Breast epithelium (tissue), 4 donors: ENCODE measurements at regions of chr20 and their contacts with region 1.

Region 1: GRCh38 chr20:58028123-58028522 is 200.3 kb downstream of the ANKRD60 start:
- DNase-seq: no peak
- H3K4me3 ChIP-seq: no peak overlapping the region
- H3K27ac ChIP-seq: no peak overlapping the region
- H3K4me1 ChIP-seq: no peaks in the 10 kb centered on the region
- H3K27me3 ChIP-seq: no peaks in the 10 kb centered on the region
- CTCF ChIP-seq: no peak
- POLR2A ChIP-seq: no peak

Region 2: DNA sequence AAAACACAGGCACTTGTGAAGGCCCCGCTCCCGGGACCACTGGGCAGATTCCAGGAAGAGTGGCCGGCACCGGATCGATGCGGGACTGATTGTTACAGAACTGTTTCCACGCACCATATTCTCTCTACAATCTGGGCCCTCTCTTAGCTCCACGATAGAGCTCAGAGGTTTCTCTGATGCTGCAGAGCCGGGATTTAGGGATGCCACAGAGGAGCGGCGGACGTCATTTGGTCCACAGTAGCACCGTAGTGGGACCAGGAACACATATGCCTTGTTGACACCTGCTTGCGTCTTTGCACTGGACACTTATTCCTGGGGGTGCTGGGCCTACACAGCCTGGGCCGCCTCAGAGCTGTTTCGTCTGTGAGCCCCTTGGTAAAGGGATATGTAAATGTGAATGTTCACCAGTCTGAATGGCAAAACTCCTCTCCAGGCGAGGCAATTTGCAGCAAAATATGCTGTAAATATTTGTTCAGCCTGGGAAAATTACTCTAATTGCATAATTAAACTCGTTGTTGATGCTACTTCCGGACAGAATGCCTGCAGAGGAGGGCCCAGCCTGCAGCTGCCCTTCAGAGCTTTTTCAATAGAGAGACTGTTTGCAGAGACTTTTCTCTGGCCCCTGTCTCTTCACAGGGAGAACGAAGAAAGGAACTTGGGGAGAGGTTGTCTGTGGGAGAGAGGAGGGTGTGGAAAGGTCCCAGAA is 457.8 kb before region 1 on chr20:
- intact Hi-C with region 1: no loop called
- DNase-seq: no peak
- H3K4me3 ChIP-seq: no peak overlapping the region
- H3K27ac ChIP-seq: no peak overlapping the region
- H3K4me1 ChIP-seq: no peaks in the 10 kb centered on the region
- H3K27me3 ChIP-seq: peaks cover 0 to 21% of the 10 kb centered on the region in 2 donors
- CTCF ChIP-seq: no peak
- POLR2A ChIP-seq: no peak

Region 3: GRCh38 chr20:57893366-57893999 is 134.6 kb before region 1 on chr20:
- intact Hi-C with region 1: loop called (anchors 1 kb)
- DNase-seq: peak in 1 of 2 donors; percentile 24
- H3K4me3 ChIP-seq: no peak overlapping the region
- H3K27ac ChIP-seq: no peak overlapping the region
- H3K4me1 ChIP-seq: no peaks in the 10 kb centered on the region
- H3K27me3 ChIP-seq: no peaks in the 10 kb centered on the region
- CTCF ChIP-seq: no peak
- POLR2A ChIP-seq: no peak

Region 4: GRCh38 chr20:58017237-58017969 is 10.7 kb before region 1 on chr20:
- intact Hi-C with region 1: loop called (anchors 1 kb)
- DNase-seq: peak; percentile 81 to 96
- H3K4me3 ChIP-seq: peak overlapping the region in 1 of 3 donors; percentile 35
- H3K27ac ChIP-seq: peak overlapping the region; percentile 88 to 89
- H3K4me1 ChIP-seq: peaks cover 11 to 15% of the 10 kb centered on the region in 2 donors
- H3K27me3 ChIP-seq: no peaks in the 10 kb centered on the region
- CTCF ChIP-seq: peak in 1 of 3 donors; percentile 40
- POLR2A ChIP-seq: no peak

Region 5: GRCh38 chr20:58065508-58066361 is 37.6 kb after region 1 on chr20:
- intact Hi-C with region 1: no loop called
- DNase-seq: peak in 1 of 2 donors; percentile 21
- H3K4me3 ChIP-seq: no peak overlapping the region
- H3K27ac ChIP-seq: no peak overlapping the region
- H3K4me1 ChIP-seq: no peaks in the 10 kb centered on the region
- H3K27me3 ChIP-seq: no peaks in the 10 kb centered on the region
- CTCF ChIP-seq: no peak
- POLR2A ChIP-seq: no peak

Region 6: GRCh38 chr20:59163631-59164530 is 1135.8 kb after region 1 on chr20 and contains the start of gene ZNF831:
- intact Hi-C with region 1: no loop called
- DNase-seq: no peak
- H3K4me3 ChIP-seq: no peak within 1 kb of the TSS
- H3K27ac ChIP-seq: peak within 1 kb of the TSS in 1 of 2 donors; percentile 35
- H3K4me1 ChIP-seq: no peaks in the 10 kb centered on the region
- H3K27me3 ChIP-seq: no peaks in the 10 kb centered on the region
- CTCF ChIP-seq: no peak
- POLR2A ChIP-seq: no peak
- total RNA-seq, gene ZNF831: 0.48 to 1.6 (median 1.2) TPM